ENCODE measurements at regions of chr1 and their contacts with region 1.

Region 1: DNA sequence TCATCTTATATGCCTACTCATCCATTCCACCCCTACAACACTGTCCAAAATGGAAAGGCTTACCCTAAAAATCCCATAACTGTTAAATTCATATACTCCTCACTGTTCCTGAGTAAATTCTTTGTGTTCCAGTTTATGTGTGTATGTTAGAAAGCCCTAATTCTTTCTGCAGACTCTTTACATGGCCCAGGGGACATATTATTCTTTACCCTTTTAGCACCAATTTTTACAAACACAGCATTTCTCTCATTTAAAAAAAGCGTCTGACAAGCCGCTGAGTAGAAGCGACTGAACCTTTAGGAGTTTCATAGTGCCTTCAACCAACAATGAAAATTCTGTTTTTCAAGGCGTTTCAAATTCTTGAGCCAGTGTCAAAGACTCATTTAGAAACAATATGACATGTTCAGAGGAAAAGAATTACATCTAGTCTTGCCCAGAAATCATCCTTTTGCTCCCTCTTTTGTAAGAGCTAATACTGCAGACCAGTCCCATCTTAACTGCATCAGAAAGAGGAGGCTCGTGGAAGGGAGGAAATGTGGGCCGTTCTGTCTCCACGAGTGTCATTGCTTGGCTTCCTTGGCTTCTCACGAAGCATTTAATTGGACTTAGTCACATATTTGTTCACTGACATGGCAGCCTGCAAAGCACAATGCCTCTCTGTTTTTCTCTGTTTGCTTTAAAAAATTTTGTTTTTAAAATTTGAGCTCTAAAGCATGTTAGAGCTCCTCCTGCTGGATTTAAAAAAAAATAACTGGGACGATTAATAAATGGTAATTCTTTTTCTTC is 21.3 kb upstream of the C1orf105 start:
- DNase-seq: peak; percentile 85
- ATAC-seq: peak; percentile 97
- H3K4me3 ChIP-seq: no peak overlapping the region
- H3K27ac ChIP-seq: peak overlapping the region; percentile 100
- H3K4me1 ChIP-seq: peaks cover 31% of the 10 kb centered on the region
- H3K27me3 ChIP-seq: no peaks in the 10 kb centered on the region
- CTCF ChIP-seq: peak; percentile 79

Region 2: DNA sequence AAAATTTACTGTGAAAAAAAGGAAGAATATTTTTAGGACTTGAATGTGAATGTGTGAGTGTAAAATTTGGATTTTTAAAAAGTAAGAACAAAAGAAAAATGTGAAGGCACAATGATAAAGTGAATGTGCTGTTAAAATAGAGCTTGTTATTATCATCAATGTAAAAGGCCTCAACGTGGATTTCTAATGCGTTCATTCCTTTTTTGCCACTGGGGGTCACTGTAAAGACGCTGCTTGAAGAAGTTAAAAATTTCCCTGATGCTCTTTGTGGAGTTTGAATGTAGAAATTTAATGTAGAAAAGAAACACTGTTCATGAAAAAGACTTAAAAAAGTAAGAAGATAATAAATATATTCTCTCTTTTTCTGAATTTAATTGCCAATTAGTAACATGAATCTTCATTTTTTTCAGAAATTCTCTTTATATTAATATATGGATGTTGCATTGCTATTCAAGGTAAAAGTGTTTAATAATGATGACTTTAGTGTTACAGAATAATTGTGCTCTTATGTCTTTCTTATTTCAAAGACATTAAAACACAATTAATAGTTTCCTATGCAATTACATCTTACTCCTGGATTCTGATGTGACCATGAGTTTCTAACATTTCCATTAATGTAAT is 396.3 kb before region 1 on chr1:
- CTCF ChIA-PET with region 1: interaction called, 5 read pairs
- POLR2A ChIA-PET with region 1: interaction called, 3 read pairs
- in situ Hi-C with region 1: no loop called
- intact Hi-C with region 1: loop called (anchors 5 kb)
- DNase-seq: peak; percentile 65
- ATAC-seq: peak; percentile 81
- H3K4me3 ChIP-seq: no peak overlapping the region
- H3K27ac ChIP-seq: peak overlapping the region; percentile 86; the same call in 1 of the 2 replicates
- H3K4me1 ChIP-seq: peaks cover 5% of the 10 kb centered on the region; the same call in 1 of the 2 replicates
- H3K27me3 ChIP-seq: no peaks in the 10 kb centered on the region
- CTCF ChIP-seq: peak; percentile 81; the same call in 1 of the 2 replicates

Region 3: GRCh38 chr1:172041742-172042141 is 357.4 kb before region 1 on chr1:
- CTCF ChIA-PET with region 1: interaction called, 6 read pairs
- POLR2A ChIA-PET with region 1: no interaction called
- in situ Hi-C with region 1: no loop called
- intact Hi-C with region 1: loop called (anchors 2 kb)
- DNase-seq: peak; percentile 18
- ATAC-seq: peak; percentile 81
- H3K4me3 ChIP-seq: no peak overlapping the region
- H3K27ac ChIP-seq: peak overlapping the region; percentile 90
- H3K4me1 ChIP-seq: no peaks in the 10 kb centered on the region; the same call in 1 of the 2 replicates
- H3K27me3 ChIP-seq: no peaks in the 10 kb centered on the region
- CTCF ChIP-seq: peak; percentile 66; the same call in 1 of the 2 replicates

Region 4: DNA sequence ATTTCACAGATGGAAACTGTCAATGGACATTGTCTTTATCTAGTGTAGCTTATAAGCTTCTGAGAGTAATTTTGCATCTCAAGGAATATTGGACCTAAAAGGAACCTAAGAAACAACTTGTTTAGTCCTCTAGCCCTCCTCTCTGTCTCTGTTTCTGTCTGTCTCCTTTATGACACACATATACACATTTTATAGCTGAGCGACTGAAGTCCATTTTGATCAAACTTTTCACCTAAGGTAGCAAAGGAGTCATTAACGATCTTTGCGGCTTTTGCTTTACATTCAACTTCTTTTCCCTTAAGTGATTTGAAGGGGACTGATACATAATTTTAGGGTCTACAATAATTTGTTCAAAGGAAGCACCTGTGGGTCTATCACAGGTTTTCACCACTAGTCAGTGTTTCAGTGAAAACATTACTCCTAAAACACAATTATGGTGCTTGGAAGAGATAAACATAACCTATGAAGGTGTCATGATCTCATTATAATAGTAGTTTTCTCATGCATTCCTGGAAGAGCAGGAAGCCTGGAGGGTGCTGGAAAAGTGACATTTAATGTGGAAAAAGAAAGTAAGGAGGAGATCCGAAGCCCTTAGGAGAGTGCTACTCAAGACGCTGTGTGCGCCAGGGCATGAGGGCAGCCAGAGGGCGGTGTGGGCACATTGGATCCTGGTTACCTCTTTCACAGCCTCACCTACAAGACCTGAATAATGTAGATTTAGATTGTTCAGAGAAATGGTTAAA is 309.2 kb before region 1 on chr1:
- CTCF ChIA-PET with region 1: no interaction called
- POLR2A ChIA-PET with region 1: no interaction called
- in situ Hi-C with region 1: no loop called
- intact Hi-C with region 1: loop called (anchors 1 kb)
- DNase-seq: peak; percentile 28
- ATAC-seq: peak; percentile 90
- H3K4me3 ChIP-seq: no peak overlapping the region
- H3K27ac ChIP-seq: peak overlapping the region; percentile 49; the same call in 1 of the 2 replicates
- H3K4me1 ChIP-seq: no peaks in the 10 kb centered on the region
- H3K27me3 ChIP-seq: no peaks in the 10 kb centered on the region
- CTCF ChIP-seq: peak; percentile 77

Region 5: DNA sequence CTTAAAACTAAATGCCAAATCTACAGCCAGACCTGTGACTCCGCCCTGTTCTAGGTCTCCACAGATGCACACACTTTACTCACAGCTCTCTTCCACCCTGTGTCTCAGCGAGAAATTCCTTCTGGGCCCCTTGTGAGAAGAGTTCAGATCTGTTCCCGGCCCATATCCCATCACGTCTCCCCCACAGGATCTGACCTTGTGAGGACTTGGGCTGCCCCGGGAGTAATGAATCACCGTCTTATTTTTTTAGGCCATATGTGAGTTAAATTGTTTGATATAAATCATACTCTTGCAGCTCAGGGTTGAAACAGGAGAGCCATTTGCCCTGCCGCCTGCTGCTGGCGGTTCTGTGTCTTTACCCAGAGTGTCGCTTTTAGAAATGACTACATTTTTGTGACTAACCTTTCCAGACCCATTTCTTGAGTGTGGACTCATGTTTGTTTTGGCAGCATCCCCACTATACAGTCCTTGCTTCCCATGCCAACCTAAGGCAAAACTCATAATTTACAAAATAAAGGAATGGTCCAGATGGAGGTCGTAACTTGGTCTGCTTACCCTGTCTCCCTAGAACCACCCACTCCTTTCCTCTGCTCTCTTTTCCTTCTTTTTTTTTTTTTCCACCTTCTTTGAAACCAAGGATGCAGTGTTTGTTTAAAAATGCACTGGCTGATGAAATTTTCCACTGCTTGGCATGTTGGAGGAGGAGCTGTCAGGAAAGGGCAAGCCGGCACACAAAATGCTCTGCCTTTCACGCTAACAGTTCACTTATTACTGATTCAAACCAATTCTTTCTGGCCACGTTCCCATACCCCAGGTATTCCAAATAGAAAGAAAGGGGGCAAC is 76.7 kb before region 1 on chr1:
- CTCF ChIA-PET with region 1: interaction called, 3 read pairs
- POLR2A ChIA-PET with region 1: interaction called, 13 read pairs
- in situ Hi-C with region 1: no loop called
- intact Hi-C with region 1: loop called (anchors 5 kb)
- DNase-seq: peak; percentile 91
- ATAC-seq: peak; percentile 92
- H3K4me3 ChIP-seq: peak overlapping the region; percentile 35 to 56
- H3K27ac ChIP-seq: peak overlapping the region; percentile 100
- H3K4me1 ChIP-seq: peaks cover 51% of the 10 kb centered on the region
- H3K27me3 ChIP-seq: no peaks in the 10 kb centered on the region
- CTCF ChIP-seq: peak; percentile 9; the same call in 1 of the 2 replicates

Region 6: GRCh38 chr1:172357753-172358385 is 41.3 kb before region 1 on chr1:
- CTCF ChIA-PET with region 1: interaction called, 7 read pairs
- POLR2A ChIA-PET with region 1: no interaction called
- in situ Hi-C with region 1: no loop called
- intact Hi-C with region 1: loop called (anchors 2 kb)
- DNase-seq: no peak
- ATAC-seq: no peak
- H3K4me3 ChIP-seq: peak overlapping the region in 1 of 2 experiments; percentile 31; a peak in 1 of 4 replicates
- H3K27ac ChIP-seq: peak overlapping the region; percentile 100
- H3K4me1 ChIP-seq: peaks cover 43% of the 10 kb centered on the region
- H3K27me3 ChIP-seq: no peaks in the 10 kb centered on the region
- CTCF ChIP-seq: no peak

Measured in Panc1 (cell line).